Left ventricle myocardium inferior (tissue), 1 donor: ENCODE measurements at regions of chr6 and their contacts with region 1.

Region 1: GRCh38 chr6:52419809-52420670 is at the start of gene EFHC1:
- DNase-seq: peak; percentile 98
- H3K4me3 ChIP-seq: peak within 1 kb of the TSS; percentile 93
- H3K27ac ChIP-seq: peak within 1 kb of the TSS; percentile 92
- H3K4me1 ChIP-seq: peaks cover 50% of the 10 kb centered on the region
- H3K27me3 ChIP-seq: no peaks in the 10 kb centered on the region
- CTCF ChIP-seq: no peak
- total RNA-seq, gene EFHC1: 5.7 TPM

Region 2: GRCh38 chr6:52499681-52500236 is 79.7 kb after region 1 on chr6:
- intact Hi-C with region 1: loop called (anchors 2 kb)
- DNase-seq: peak; percentile 53
- H3K4me3 ChIP-seq: peak overlapping the region; percentile 22
- H3K27ac ChIP-seq: peak overlapping the region; percentile 88
- H3K4me1 ChIP-seq: peaks cover 76% of the 10 kb centered on the region
- H3K27me3 ChIP-seq: no peaks in the 10 kb centered on the region
- CTCF ChIP-seq: peak; percentile 37

Region 3: DNA sequence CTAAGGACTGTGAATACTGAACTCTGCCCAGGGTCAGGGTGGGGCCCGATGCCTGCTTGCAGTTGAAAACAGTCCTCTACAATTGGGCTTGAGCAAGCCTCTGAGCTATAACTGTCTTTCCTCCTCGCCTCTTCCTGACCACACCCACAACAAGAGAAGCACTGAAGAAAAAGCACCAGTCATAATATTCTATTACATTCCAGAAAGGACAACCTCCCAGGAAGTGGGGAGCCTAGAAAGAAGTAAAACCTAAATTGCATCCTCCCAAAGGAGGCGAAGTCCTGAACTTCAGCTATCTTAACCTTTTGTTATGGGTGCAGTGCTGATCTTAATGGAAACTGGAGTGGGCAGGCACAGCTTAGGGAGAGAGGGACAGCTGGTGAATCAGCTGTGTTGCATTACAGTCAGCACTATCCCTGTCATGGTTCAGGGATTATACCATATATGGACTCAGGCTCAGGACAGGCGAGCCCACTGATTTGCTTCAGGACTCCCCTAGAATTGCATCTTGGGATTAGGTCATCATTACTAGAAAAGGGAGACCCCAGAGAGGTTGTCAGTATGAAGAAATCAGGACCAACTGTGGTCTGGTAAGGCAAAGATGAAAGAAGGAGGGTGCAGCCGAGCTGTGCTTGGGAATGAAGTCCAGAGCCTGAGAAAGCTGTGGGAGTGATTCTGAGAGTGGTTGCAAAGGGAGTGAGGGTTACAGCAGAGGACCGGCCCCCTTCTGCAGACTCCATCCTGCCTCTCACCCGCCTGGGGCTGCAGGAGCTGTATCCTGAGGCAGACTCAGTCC is 175.2 kb after region 1 on chr6:
- intact Hi-C with region 1: loop called (anchors 5 kb)
- DNase-seq: peak; percentile 34
- H3K4me3 ChIP-seq: peak overlapping the region; percentile 24
- H3K27ac ChIP-seq: peak overlapping the region; percentile 63
- H3K4me1 ChIP-seq: peaks cover 40% of the 10 kb centered on the region
- H3K27me3 ChIP-seq: no peaks in the 10 kb centered on the region
- CTCF ChIP-seq: no peak

Region 4: GRCh38 chr6:52664186-52664990 is 244.3 kb after region 1 on chr6:
- intact Hi-C with region 1: loop called (anchors 2 kb)
- DNase-seq: peak; percentile 89
- H3K4me3 ChIP-seq: peak overlapping the region; percentile 82
- H3K27ac ChIP-seq: peak overlapping the region; percentile 76
- H3K4me1 ChIP-seq: peaks cover 24% of the 10 kb centered on the region
- H3K27me3 ChIP-seq: no peaks in the 10 kb centered on the region
- CTCF ChIP-seq: no peak